Transverse colon (tissue), 4 donors: ENCODE measurements at regions of chr6 and their contacts with region 1.

Region 1: GRCh38 chr6:109255946-109256640 is 126.2 kb downstream of the CD164 start:
- DNase-seq: no peak
- H3K4me3 ChIP-seq: no peak overlapping the region
- H3K27ac ChIP-seq: peak overlapping the region; percentile 44 to 77 (median 70)
- H3K4me1 ChIP-seq: peaks cover 10 to 54% (median 35%) of the 10 kb centered on the region in 4 donors
- H3K27me3 ChIP-seq: no peaks in the 10 kb centered on the region
- CTCF ChIP-seq: no peak
- EP300 ChIP-seq: no peak
- POLR2A ChIP-seq: no peak

Region 2: GRCh38 chr6:108982154-108983113 is 273.7 kb before region 1 on chr6:
- in situ Hi-C with region 1: no loop called
- intact Hi-C with region 1: no loop called
- DNase-seq: no peak
- H3K4me3 ChIP-seq: no peak overlapping the region
- H3K27ac ChIP-seq: no peak overlapping the region
- H3K4me1 ChIP-seq: no peaks in the 10 kb centered on the region
- H3K27me3 ChIP-seq: no peaks in the 10 kb centered on the region
- CTCF ChIP-seq: no peak
- EP300 ChIP-seq: no peak
- POLR2A ChIP-seq: no peak

Region 3: DNA sequence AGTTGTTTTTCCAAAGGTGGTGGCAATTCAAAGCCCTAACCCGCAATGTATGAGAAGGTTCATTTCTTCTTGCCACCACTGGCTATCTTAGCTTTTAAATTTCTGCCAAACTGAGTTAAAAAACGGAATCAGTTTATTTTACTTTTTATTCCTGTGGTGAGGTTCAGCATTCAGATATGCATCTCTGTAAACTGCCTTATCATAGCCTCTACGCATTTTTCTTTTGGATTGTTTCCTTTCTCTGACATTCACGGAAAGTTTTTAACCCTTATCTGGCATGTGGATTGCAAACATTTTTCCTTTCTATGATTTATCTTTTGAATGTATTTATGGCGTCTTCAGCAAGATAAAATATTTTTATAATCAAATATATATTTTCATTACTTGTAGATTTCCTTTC is 397.2 kb after region 1 on chr6:
- in situ Hi-C with region 1: no loop called
- intact Hi-C with region 1: no loop called
- DNase-seq: no peak
- H3K4me3 ChIP-seq: no peak overlapping the region
- H3K27ac ChIP-seq: no peak overlapping the region
- H3K4me1 ChIP-seq: no peaks in the 10 kb centered on the region
- H3K27me3 ChIP-seq: no peaks in the 10 kb centered on the region
- CTCF ChIP-seq: no peak
- EP300 ChIP-seq: no peak
- POLR2A ChIP-seq: no peak

Region 4: DNA sequence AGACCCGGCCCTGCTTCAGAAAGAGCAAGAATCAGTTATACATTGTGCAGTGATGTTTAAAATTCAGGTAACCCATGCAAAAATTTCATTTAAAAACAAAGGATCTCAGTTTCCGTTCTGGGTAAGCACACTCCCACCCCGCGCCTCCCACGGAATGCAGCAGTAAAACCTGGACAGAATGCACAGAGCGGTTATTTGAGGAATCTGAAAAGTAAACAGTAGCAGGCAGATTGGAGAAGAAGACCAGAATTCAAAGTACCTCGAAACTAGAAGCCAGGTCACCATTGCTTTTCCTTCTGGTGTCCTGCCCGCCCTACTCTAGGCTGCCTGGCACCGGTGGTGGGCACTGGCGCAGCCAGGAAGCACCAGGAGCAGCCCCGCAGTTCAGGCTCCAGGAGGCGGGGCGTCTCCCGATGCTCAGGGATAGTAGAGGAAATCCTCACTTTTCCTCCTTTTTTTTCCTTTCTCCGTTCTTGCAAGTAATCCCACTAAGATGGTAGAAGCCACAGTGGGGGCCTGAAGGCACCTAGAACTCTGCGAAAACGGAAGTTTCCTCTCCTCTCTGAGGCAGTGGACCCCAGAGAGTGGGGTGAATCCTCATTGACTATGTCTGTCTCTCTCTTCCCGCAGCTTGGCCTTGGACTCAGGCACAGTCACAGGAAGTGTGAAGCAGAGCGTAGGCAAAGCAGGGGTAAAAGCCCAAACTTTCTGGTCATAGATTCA is 1073.8 kb after region 1 on chr6:
- in situ Hi-C with region 1: no loop called
- intact Hi-C with region 1: loop called (anchors 10 kb)
- DNase-seq: peak; percentile 19
- H3K4me3 ChIP-seq: peak overlapping the region in 3 of 4 donors; percentile 17 to 34 (median 20)
- H3K27ac ChIP-seq: peak overlapping the region; percentile 71 to 84 (median 78)
- H3K4me1 ChIP-seq: peaks cover 12 to 60% (median 41%) of the 10 kb centered on the region in 4 donors
- H3K27me3 ChIP-seq: no peaks in the 10 kb centered on the region
- CTCF ChIP-seq: no peak
- EP300 ChIP-seq: no peak
- POLR2A ChIP-seq: no peak